Heart right ventricle (tissue), 16 donors: ENCODE measurements at regions of chr9 and their contacts with region 1.

Region 1: DNA sequence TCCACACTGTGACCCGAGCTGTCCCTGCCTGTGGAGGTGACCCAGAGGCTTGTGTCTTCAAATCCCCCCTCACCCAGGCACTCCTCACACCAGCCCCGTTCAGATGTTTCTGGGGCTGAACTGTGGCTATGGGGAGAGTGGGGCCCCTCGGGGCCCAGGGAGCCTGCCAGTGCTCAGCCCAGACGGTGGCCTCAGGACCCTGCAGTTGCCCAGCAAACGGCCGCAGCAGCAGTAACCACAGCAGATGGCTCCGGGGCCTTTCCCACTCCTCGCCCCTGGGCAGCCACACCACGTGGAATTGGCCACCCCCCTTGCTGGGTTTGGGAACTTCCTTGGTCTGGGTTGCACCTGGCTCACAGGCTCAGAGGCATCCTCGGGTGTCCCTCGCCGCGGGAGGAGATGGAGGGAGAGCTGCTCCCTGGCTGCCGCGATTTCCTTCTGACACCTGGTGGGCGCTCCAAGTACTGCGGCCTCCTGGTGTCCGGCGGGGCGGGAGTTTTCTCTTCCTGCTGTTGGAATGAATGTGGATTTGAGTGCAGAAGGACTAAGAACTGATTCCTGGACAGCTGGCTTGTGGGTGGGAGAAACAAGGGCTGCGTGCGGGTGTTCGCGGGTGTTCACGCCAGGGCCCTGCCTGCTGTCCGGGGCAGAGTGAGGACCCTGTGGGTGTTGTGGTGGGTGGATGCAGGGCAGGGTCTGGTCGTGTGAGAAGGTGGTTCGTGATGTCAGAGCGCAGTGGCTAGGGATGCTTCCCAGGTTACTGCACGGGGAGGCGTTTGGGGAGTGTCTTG is 97.5 kb downstream of the COL5A1 start:
- DNase-seq: peak; percentile 77 to 78
- ATAC-seq: peak; percentile 39 to 66 (median 58)
- H3K4me3 ChIP-seq: no peak overlapping the region
- H3K27ac ChIP-seq: peak overlapping the region in 2 of 10 donors; percentile 35 to 41
- H3K4me1 ChIP-seq: peaks cover 4 to 47% (median 11%) of the 10 kb centered on the region in 9 donors
- H3K27me3 ChIP-seq: no peaks in the 10 kb centered on the region
- CTCF ChIP-seq: peak; percentile 79 to 96 (median 90)

Region 2: GRCh38 chr9:134163353-134164196 is 575.5 kb before region 1 on chr9:
- intact Hi-C with region 1: loop called in 1 of 10 experiments (anchors 10 kb)
- DNase-seq: peak; percentile 57 to 74
- ATAC-seq: peak in 4 of 8 donors; percentile 8 to 36 (median 22)
- H3K4me3 ChIP-seq: peak overlapping the region in 1 of 10 donors; percentile 42
- H3K27ac ChIP-seq: peak overlapping the region in 1 of 10 donors; percentile 79
- H3K4me1 ChIP-seq: peaks cover 0 to 24% (median 10%) of the 10 kb centered on the region in 9 donors
- H3K27me3 ChIP-seq: no peaks in the 10 kb centered on the region
- CTCF ChIP-seq: peak in 8 of 9 donors; percentile 18 to 53 (median 46)

Region 3: DNA sequence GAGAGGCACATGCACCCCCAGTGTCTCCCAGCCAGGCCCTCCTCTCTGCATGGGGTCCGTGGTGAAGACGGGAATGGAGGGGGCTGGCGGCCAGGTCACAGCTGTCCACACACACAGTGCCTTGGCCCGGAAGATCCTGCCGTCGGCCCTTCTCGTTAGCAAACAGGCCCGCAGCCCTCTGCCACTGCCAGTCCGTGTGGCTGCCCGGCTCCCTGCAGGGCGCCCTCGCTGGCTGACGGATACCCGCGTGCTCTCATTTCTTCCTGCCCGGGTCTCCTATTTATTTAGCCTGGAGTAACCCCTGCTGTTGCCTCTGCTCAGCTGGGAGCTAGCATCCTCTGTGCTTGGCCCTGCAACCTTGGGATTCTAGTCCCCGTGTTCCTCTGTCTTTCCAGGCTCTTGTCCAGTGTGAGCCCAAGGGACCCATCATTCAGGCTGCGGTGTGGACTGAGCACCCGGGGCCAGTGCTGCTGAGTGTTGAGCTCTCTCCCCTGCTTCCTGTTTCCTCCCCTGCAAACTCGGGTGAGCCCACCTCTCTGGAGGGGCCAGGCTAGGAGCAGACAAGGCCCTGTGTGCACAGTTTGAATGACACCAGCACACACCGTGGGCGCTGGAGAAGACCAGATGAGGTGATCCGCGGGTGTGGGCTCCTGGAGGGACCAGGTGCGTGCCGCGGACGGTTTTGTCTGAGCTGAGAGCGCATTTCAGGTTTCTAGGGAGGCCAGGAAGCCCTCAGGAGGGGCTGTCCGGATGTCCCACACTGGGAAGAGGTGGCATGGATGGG is 560.1 kb before region 1 on chr9:
- intact Hi-C with region 1: loop called in 4 of 10 experiments (anchors 5 to 10 kb)
- DNase-seq: peak in 1 of 2 donors; percentile 57
- ATAC-seq: peak; percentile 5 to 71 (median 46)
- H3K4me3 ChIP-seq: no peak overlapping the region
- H3K27ac ChIP-seq: peak overlapping the region in 1 of 10 donors; percentile 10
- H3K4me1 ChIP-seq: peaks cover 0 to 40% (median 27%) of the 10 kb centered on the region in 9 donors
- H3K27me3 ChIP-seq: peaks cover 0 to 38% (median 24%) of the 10 kb centered on the region in 7 donors
- CTCF ChIP-seq: no peak

Region 4: DNA sequence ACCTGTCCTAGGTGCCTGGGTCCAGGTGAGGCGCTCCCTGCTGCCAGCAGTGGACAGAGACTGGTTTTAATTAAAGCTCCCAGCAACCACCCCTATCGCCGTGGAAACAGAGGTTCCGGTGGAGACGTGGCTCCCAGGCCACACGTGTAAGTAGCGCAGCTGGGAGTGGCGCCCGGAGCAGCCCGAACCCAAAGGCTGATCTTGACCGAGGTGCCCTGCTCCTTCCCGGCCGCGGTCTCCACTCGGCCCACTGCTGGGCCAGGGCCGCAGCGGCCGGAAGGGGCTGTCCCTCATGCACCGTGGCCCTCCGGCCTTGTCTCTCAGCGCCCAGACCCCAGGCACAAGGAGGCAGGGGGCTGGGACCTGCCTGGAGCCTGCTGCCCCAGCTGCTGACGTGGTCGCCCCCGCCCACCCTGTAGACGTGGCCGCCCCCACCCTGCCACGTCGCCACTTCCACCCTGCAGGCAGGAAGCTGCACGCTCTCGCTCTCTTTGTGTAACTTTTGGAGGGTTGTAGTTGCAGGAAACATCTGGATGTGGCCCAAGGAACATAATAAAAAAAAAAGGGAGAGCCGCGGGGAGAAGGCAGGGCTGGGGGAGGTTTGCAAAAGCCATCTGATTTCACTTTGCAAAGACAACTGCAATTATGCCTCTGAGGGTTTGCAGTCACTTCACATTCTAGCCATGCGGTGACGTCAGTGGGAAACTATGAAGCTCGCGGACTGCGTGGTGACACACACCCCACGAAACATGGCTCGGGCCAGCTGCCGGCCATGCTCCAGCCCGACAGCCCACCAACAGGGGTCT is 282.9 kb before region 1 on chr9:
- intact Hi-C with region 1: loop called in 4 of 10 experiments (anchors 2 to 10 kb)
- DNase-seq: peak; percentile 84 to 91
- ATAC-seq: peak; percentile 84 to 94 (median 90)
- H3K4me3 ChIP-seq: peak overlapping the region in 9 of 10 donors; percentile 21 to 51 (median 39)
- H3K27ac ChIP-seq: peak overlapping the region; percentile 81 to 97 (median 92)
- H3K4me1 ChIP-seq: peaks cover 14 to 46% (median 33%) of the 10 kb centered on the region in 9 donors
- H3K27me3 ChIP-seq: no peaks in the 10 kb centered on the region
- CTCF ChIP-seq: peak in 1 of 9 donors; percentile 15

Region 5: DNA sequence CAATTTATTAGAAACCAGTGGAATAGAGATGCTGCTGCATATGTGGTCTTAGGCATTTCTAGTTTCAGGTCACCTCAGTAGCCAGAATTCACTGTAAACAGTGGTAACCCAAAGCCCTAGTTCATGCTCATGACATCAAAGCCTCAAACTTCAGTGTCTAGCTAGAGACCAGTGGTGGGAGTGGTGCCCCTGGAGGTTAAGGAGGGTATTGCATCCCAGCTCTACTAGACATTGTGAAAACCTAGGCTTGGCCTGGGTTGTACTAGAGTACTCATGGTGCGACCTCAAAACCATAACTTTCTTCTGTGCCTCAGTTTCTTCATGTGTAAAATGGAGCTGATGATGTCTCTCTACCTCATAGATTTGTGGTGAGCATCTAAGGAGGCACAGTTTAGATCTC is 78.7 kb before region 1 on chr9:
- intact Hi-C with region 1: no loop called
- DNase-seq: no peak
- ATAC-seq: no peak
- H3K4me3 ChIP-seq: no peak overlapping the region
- H3K27ac ChIP-seq: no peak overlapping the region
- H3K4me1 ChIP-seq: peaks cover 17 to 47% (median 30%) of the 10 kb centered on the region in 9 donors
- H3K27me3 ChIP-seq: no peaks in the 10 kb centered on the region
- CTCF ChIP-seq: peak; percentile 8 to 48 (median 27)

Region 6: DNA sequence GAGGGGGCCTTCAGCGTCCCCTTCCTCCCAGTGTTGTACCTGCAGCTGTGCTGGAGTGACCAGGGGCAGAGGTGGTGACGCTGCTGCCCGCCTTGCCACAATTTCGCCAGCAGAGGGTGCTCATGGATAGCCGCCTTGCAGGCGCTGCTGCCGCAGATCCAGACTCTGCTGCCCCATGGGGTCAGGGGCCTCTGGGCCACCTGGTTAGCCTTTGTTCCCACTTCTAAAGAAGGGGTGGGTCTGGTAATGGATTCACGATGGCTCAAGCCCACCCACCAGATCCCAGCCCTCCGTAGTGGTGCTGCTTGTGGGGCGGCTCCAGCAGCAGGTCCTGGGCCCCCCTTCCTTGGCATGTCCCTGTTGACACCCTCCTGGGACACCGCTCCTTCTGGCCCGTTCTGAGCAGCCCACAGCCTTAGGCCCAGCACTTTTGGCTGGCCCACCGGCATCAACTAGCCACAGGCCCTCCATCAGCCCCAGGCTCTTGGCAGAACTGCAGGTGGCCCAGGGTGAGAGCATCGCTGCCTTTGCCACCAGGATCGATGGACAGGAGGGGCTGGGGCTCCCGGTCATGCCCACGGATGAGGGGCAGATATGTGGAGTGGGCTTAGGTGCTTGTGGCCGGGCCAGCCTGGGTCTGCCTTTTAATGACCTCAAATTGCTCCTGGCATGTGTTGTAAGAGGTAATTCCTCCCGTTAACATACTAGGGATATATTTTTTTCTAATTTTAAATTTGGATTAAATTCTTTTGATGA is 40.3 kb before region 1 on chr9:
- intact Hi-C with region 1: loop called (anchors 1 to 5 kb)
- DNase-seq: peak; percentile 66 to 78
- ATAC-seq: peak; percentile 66 to 87 (median 80)
- H3K4me3 ChIP-seq: no peak overlapping the region
- H3K27ac ChIP-seq: peak overlapping the region in 1 of 10 donors; percentile 21
- H3K4me1 ChIP-seq: peaks cover 0 to 25% (median 7%) of the 10 kb centered on the region in 9 donors
- H3K27me3 ChIP-seq: no peaks in the 10 kb centered on the region
- CTCF ChIP-seq: peak; percentile 89 to 97 (median 93)

Region 7: GRCh38 chr9:134709512-134710270 is 29.4 kb before region 1 on chr9:
- intact Hi-C with region 1: loop called in 4 of 10 experiments (anchors 2 to 5 kb)
- DNase-seq: peak; percentile 23 to 76
- ATAC-seq: peak; percentile 30 to 76 (median 48)
- H3K4me3 ChIP-seq: no peak overlapping the region
- H3K27ac ChIP-seq: peak overlapping the region in 8 of 10 donors; percentile 46 to 85 (median 64)
- H3K4me1 ChIP-seq: peaks cover 21 to 63% (median 31%) of the 10 kb centered on the region in 9 donors
- H3K27me3 ChIP-seq: peaks cover 0 to 4% (median 0%) of the 10 kb centered on the region in 7 donors
- CTCF ChIP-seq: no peak